ENCODE measurements at regions of chr11 and their contacts with region 1.

Region 1: GRCh38 chr11:7571640-7572000 is 57.8 kb downstream of the PPFIBP2 start:
- DNase-seq: peak; percentile 65
- H3K4me3 ChIP-seq: no peak overlapping the region
- H3K27ac ChIP-seq: peak overlapping the region; percentile 56
- H3K4me1 ChIP-seq: peaks cover 28% of the 10 kb centered on the region
- H3K27me3 ChIP-seq: no peaks in the 10 kb centered on the region
- CTCF ChIP-seq: peak; percentile 97

Region 2: DNA sequence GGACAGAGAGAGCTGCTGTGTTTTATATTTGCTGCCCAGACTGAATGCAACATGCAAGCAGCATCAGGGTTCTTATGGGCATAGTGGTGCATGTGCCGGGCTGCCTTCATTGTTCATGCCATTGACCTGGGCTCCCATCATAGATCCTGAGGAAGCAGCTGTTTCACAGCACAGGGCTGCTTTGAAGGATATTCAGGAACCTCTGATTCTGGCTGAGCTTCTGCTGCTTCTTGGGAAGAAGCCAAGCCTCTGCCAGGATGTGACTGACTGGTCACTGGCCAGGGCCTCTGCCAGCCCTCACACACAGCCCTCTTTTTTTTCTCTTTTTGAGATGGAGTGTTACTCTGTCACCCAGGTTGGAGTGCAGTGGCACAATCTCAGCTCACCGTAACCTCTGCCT is 58.4 kb after region 1 on chr11:
- intact Hi-C with region 1: no loop called
- DNase-seq: peak; percentile 34
- H3K4me3 ChIP-seq: no peak overlapping the region
- H3K27ac ChIP-seq: no peak overlapping the region
- H3K4me1 ChIP-seq: peaks cover 11% of the 10 kb centered on the region
- H3K27me3 ChIP-seq: no peaks in the 10 kb centered on the region
- CTCF ChIP-seq: no peak

Region 3: DNA sequence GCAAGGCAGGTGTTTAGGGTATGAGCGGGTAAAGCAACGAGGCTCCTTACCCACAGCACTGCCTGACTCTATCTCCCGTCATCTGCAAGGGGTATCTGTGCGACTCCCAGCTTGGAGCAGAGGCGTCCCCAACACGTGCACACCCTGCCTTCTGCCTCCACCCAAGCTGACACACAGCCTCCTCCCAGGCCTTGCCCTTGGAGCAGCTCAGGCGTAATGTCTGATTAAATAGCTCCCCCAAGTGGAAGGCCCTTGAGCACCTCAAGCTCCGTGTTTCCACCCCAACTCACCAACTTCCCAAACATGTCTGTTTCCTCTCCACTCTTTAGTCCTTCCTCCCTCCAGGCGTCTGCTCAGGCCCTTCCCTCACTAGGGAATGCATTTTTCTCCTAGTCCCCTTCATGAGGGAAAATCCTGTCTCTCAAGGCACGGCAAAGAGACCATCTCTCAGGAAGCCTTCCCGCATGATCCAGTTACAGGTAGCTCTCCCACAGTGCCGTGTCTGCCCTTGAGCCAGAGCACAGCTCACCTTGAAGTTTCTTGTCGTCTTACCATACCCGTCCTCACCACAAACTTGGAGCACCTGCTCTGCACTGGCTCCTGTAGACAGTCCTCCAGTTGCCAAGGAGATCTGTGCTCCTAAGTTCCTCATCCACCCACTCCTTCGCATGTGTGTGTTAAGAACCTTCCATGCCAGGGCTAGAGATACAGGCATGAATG is 85.8 kb after region 1 on chr11:
- intact Hi-C with region 1: loop called (anchors 10 kb)
- DNase-seq: no peak
- H3K4me3 ChIP-seq: no peak overlapping the region
- H3K27ac ChIP-seq: peak overlapping the region; percentile 73
- H3K4me1 ChIP-seq: peaks cover 24% of the 10 kb centered on the region
- H3K27me3 ChIP-seq: no peaks in the 10 kb centered on the region
- CTCF ChIP-seq: peak; percentile 68

Measured in left ventricle myocardium inferior (tissue), 1 donor.